ENCODE measurements at regions of chr7 and their contacts with region 1.

Region 1: DNA sequence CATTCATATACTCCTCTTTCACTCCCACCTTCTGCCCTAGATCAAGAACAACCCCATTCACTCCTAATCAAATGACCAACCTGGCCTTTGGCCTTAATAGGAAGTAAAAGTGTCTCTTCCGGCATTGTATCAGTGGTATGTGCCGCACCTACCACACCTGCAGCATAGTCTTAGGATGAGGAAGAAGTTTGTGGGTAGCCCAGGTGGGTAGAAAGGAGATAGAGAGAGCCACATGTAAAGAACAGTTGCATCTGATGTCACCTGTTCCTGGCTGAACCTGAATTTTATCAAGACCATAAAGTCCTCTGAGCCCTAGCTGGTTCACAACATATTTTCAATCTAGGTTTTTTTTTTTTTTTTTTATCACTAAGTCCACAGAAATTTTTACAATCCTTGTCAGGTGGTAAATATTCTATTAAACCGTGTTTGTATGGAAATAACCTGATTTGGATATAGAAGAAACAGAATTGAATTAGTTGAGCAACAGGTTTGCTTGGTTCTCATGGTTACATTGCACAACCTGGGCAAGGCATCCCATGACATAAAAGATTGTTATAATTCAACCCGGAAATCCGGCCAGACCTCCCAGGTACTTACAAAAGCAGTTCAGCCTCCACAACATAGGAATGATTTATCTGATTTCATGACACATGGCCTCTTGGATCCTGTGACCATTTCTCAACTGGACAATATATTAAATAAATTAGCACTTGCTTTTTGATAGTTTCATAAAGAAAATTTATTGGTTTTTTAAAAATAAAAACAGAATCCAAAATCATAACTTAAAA is 55.3 kb upstream of the PTPN12 start:
- DNase-seq: peak; percentile 73 to 95
- H3K4me3 ChIP-seq: 0 out of 2 replicates have a peak overlapping the region, but pooled peaks have one; percentile 3
- H3K27ac ChIP-seq: peak overlapping the region; percentile 94
- H3K4me1 ChIP-seq: peaks cover 44% of the 10 kb centered on the region
- H3K27me3 ChIP-seq: no peaks in the 10 kb centered on the region
- CTCF ChIP-seq: no peak

Region 2: DNA sequence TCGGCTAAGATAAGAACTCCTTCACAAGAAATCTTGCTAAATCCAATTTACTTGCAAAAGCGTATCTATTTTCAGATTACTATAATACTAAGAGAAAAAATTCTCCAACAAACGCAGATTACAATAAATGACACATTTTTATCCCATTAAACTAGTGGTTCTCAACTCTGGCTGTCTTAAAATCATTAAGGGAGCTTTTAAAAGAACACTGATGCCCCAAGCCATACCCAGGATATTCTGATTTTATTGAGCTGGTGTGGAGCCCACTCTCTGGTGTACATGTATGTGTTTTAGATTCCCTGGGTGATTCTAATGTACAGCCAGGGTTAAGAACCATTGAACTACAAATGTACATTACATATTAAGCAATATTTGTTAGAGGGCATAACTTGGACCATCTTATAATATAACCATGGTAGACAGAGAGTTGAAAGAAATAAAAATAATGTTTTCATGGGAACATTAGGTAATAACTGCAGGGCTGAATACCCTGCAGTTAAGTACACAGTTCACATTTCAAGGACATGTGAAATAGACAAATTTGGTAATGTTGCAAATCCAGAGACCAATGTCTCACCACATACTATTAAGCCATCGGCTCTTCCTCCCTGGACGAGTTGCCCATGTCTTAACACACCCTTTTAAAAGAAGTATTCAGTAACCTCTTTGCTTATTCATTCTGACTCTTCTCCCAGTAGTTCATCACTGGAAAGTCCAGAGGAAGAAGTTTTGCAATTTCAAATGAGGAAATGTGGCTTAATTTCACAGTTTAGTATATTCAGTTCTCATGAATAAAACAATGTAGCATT is 71.9 kb before region 1 on chr7:
- CTCF ChIA-PET with region 1: no interaction called
- POLR2A ChIA-PET with region 1: interaction called, 5 read pairs
- intact Hi-C with region 1: loop called (anchors 2 kb)
- DNase-seq: peak; percentile 30 to 95
- H3K4me3 ChIP-seq: peak overlapping the region; percentile 45
- H3K27ac ChIP-seq: peak overlapping the region; percentile 100
- H3K4me1 ChIP-seq: peaks cover 63% of the 10 kb centered on the region
- H3K27me3 ChIP-seq: no peaks in the 10 kb centered on the region
- CTCF ChIP-seq: no peak

Region 3: DNA sequence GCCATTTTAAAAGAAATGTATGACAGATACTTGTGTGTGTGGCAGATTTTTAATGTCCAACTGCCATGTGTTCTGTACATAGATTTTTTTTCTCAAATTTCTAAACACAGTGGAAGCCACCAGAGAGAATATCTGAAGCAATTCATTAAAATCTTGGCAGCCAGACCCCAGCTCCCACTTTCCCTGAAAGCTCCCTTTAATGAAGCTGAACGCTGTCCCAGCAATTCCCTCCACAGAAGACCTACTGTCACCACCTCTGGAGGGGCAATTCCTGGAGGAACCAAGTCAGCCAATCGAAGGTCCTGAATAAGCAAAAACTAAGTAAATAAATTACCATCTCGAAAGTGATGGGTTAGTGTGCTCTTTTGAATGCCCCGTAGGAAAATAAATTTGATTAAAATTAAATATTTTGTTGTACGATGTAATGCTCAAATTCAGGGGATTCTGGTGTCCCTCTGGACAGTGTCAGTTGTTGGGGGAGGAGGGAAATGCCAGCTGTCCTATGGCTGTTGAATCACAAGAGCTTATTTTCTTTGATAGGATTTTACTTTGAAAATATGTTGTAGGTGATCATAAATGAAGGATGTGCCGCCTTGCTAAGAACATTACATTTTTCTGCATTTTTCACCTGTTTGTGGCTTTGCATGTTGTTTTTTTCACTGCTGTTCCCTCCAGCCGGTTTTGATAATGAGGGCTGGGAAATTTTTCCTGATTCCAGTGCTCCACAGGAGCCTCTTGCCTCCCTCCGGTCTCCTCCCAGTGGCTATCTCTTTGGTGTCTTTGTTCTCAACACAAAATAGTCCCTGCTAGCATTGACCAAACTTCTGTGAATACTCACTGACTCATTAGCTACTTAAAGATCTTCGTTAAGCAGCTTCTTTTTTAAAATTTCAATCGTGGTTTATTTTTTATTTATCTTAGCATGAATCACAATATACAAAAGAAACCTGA is 56.4 kb before region 1 on chr7:
- CTCF ChIA-PET with region 1: no interaction called
- POLR2A ChIA-PET with region 1: no interaction called
- intact Hi-C with region 1: loop called (anchors 5 kb)
- DNase-seq: peak; percentile 8 to 60
- H3K4me3 ChIP-seq: peak overlapping the region; percentile 26; the same call in 1 of the 2 replicates
- H3K27ac ChIP-seq: peak overlapping the region; percentile 80
- H3K4me1 ChIP-seq: peaks cover 59% of the 10 kb centered on the region
- H3K27me3 ChIP-seq: no peaks in the 10 kb centered on the region
- CTCF ChIP-seq: no peak

Region 4: GRCh38 chr7:77498659-77499422 is 17.0 kb after region 1 on chr7:
- CTCF ChIA-PET with region 1: no interaction called
- POLR2A ChIA-PET with region 1: interaction called, 10 read pairs
- intact Hi-C with region 1: no loop called
- DNase-seq: no peak
- H3K4me3 ChIP-seq: no peak overlapping the region
- H3K27ac ChIP-seq: no peak overlapping the region
- H3K4me1 ChIP-seq: peaks cover 7% of the 10 kb centered on the region
- H3K27me3 ChIP-seq: no peaks in the 10 kb centered on the region
- CTCF ChIP-seq: no peak

Region 5: GRCh38 chr7:77657427-77658224 is 175.8 kb after region 1 on chr7:
- CTCF ChIA-PET with region 1: no interaction called
- POLR2A ChIA-PET with region 1: no interaction called
- intact Hi-C with region 1: no loop called
- DNase-seq: peak in 1 of 2 experiments; percentile 50
- H3K4me3 ChIP-seq: no peak overlapping the region
- H3K27ac ChIP-seq: no peak overlapping the region
- H3K4me1 ChIP-seq: no peaks in the 10 kb centered on the region
- H3K27me3 ChIP-seq: no peaks in the 10 kb centered on the region
- CTCF ChIP-seq: peak; percentile 73